ENCODE measurements at regions of chr2 and their contacts with region 1.

Region 1: GRCh38 chr2:42663106-42663780 is 94.8 kb downstream of the MTA3 start:
- DNase-seq: peak; percentile 9
- H3K4me3 ChIP-seq: no peak overlapping the region
- H3K27me3 ChIP-seq: no peaks in the 10 kb centered on the region
- CTCF ChIP-seq: peak; percentile 100

Region 2: GRCh38 chr2:42494355-42495233 is 168.6 kb before region 1 on chr2:
- CTCF ChIA-PET with region 1: interaction called, 11 read pairs
- POLR2A ChIA-PET with region 1: no interaction called
- DNase-seq: peak; percentile 11
- H3K4me3 ChIP-seq: peak overlapping the region; percentile 43
- H3K27me3 ChIP-seq: peaks cover 21% of the 10 kb centered on the region
- CTCF ChIP-seq: peak; percentile 92

Region 3: DNA sequence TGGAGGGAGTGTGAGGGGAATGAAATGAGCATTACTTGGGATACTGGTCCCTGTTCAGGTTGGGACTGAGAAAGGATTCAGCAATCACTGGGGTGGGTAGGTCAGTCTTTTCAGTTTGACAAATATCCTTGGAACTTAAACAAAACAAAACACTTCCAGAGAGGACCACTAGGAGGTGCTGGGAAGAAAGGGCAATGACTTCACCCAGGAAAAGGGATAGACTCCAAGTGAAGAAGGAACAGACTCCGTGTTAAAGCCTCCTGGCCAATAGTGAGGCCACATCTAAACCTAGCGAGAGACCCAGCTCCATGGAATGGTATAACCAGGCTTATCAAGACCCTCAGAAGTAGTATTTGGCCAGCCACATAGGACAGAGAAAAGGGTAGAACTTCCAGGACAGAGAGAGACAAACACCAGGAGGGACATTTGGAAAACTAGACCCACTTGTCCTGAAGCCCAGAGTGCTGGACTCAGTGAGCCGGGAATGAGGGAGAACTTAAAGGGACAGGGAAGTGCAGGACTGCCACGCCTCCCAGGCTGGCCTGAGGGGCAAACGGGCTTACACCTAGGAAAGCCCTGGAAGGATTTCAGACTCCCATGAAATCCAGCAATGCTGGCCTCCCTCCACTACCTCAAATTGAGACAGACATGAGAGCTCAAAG is 149.9 kb before region 1 on chr2:
- CTCF ChIA-PET with region 1: interaction called, 24 read pairs
- POLR2A ChIA-PET with region 1: no interaction called
- DNase-seq: peak; percentile 11
- H3K4me3 ChIP-seq: no peak overlapping the region
- H3K27me3 ChIP-seq: no peaks in the 10 kb centered on the region
- CTCF ChIP-seq: peak; percentile 78

Region 4: DNA sequence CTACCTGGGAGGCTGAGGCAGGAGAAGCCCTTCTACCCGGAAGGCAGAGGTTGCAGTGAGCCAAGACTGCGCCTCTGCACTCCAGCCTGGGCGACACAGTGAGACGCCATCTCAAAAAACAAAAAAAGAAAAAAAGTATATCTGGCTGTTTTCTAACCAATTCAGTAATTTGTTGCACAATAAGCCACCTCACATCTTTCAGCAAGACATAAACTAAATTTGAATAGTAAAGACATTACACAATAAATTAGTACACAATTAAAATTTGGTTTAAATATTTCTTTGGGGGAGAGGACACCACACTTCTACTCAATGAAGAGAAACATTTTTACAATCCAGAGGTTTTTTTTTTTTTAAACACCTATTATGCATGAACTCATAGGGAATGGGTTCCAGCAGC is 130.8 kb before region 1 on chr2:
- CTCF ChIA-PET with region 1: no interaction called
- POLR2A ChIA-PET with region 1: no interaction called
- DNase-seq: no peak
- H3K4me3 ChIP-seq: no peak overlapping the region
- H3K27me3 ChIP-seq: no peaks in the 10 kb centered on the region
- CTCF ChIP-seq: no peak

Region 5: DNA sequence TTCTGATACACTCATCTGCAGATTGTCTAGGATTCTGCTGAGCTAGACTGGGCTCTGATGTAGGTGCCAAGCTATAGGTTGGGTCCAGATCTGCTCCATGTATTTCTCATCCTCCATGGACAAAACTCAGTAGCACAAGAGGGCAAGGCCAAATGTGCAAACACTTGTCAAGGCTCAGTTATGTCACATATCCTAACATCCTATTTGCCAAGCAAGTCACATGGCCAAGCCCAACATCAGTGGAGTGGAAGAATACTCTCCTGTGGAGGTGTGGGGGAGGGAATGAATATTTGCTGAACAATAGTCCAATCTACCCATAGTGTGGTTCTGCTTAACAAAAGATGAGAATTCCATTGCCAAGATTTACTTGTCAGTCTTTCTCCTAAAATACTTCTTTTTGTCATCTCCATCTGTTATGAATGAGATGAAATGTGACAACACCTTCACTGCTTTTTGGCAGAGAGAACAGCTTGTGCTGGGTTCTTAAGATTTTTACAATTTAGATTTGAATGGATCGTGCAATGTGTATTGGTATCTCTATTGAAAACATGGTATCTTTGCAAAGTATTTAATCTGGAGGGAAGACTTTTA is 10.8 kb after region 1 on chr2:
- CTCF ChIA-PET with region 1: interaction called, 23 read pairs
- POLR2A ChIA-PET with region 1: no interaction called
- DNase-seq: no peak
- H3K4me3 ChIP-seq: no peak overlapping the region
- H3K27me3 ChIP-seq: no peaks in the 10 kb centered on the region
- CTCF ChIP-seq: no peak

Region 6: DNA sequence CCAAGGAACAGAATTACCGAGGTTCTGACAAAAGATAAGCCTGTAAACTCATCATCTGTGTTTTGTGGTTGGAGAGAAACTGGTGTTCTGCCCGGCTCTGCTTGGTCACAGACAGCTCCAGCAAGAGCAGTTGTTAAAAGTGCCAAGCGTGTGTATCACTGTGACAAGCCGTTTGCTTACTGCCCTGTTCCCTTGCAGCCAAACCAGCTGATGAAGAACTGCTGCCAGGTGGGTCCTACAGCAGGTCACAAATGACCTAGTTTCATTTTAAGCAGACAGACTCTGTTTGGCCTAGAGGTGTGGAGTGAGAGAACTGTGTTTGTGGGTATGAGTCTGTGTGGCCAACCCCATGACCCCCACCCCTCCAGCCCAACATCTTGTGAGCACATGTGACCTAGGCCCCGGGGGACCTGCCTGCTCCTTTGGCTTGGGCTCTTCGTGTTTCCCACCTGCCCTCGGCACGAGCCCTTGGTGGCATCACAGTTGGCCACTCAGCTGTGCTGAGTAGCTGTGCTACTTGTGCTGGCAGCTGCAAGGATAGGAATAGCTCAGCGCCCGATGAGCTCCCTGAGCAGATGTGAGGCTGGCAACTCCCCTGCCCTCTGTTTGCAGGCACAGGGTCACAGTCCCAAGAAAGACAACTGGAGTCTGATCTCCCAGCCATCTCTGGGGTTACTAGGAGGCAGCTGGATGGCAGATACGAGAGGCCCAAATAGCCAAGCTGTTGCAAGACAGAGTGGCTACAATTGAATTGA is 91.0 kb after region 1 on chr2:
- CTCF ChIA-PET with region 1: no interaction called
- POLR2A ChIA-PET with region 1: no interaction called
- DNase-seq: no peak
- H3K4me3 ChIP-seq: no peak overlapping the region
- H3K27me3 ChIP-seq: no peaks in the 10 kb centered on the region
- CTCF ChIP-seq: no peak

Region 7: DNA sequence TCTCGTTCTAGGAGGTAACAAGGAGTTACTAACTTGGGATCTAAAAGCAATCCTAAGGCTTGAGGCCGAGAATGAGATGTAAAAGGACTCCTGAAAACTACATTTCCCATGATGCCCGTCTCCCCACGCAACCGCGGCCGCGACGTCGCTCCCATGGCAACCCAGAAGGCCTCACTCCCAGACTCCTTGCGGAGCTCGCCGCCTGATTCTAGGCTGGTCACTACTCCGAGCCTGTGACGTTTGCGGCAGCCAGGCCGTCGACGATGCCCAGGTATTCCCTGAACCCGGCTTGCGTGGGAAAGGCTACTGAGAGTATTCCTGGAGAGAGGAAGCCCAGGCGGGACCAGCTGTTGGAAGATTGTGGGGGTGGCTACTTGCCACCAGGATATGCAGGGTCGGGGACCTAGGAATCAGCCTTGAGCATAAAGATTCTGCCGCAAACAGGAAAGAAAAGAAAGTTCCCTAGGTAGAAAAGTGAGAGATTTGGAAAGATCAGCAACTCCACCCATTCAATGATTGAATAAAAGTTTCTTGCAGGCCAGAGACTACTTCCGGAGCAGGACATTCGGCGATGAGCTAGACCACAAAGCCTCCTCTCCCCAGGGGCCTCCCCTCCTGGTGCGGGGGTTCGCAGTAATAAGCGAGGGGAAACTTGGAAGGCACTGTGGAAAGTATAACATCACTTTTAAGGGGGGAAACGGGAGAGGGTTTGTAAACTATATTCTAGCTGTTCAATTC is 1110.8 kb after region 1 on chr2 and contains the start of gene DYNC2LI1:
- CTCF ChIA-PET with region 1: no interaction called
- POLR2A ChIA-PET with region 1: interaction called, 12 read pairs
- DNase-seq: peak; percentile 65
- H3K4me3 ChIP-seq: peak within 1 kb of the TSS; percentile 86
- H3K27me3 ChIP-seq: no peaks in the 10 kb centered on the region
- CTCF ChIP-seq: no peak
- polyA plus RNA-seq, gene DYNC2LI1: 7.2 and 15.3 TPM in 2 replicates